ENCODE measurements at regions of chr12 and their contacts with region 1.

Region 1: GRCh38 chr12:39077226-39077625 is 171.8 kb upstream of the CPNE8 start:
- DNase-seq: no peak
- ATAC-seq: no peak
- H3K4me3 ChIP-seq: no peak overlapping the region
- H3K27ac ChIP-seq: no peak overlapping the region
- H3K4me1 ChIP-seq: no peaks in the 10 kb centered on the region
- H3K27me3 ChIP-seq: no peaks in the 10 kb centered on the region
- CTCF ChIP-seq: no peak

Region 2: DNA sequence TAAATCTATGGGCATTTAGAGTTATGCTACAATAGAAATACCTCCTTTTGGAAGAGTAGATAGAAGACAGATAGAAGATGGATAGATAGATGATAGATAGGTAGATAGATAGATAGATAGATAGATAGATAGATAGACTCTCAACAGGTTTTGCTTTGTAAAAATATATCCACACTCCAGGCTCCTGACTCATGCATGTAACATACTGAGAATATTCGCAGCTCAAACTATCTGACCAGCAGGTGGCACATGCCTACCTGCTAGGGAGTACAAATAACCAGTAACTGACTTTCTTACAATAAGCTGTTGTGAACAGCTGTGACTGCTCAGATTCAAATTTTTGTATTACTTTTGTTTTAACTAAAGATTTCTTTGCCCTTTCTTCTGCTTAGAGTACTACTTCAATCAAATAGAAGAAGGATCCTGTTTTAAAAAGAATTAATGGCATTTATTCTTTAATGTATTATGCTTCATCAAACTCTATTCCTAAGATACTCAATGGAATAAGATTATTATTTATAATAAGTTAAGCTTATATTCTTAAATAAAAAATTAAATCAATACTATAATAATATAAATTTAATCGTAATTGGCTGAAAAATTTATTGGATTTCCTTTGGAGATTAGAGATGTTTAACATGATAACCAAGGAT is 156.1 kb before region 1 on chr12:
- CTCF ChIA-PET with region 1: interaction called, 4 read pairs
- POLR2A ChIA-PET with region 1: no interaction called
- intact Hi-C with region 1: loop called (anchors 10 kb)
- DNase-seq: peak; percentile 92
- ATAC-seq: peak; percentile 96
- H3K4me3 ChIP-seq: no peak overlapping the region
- H3K27ac ChIP-seq: no peak overlapping the region
- H3K4me1 ChIP-seq: peaks cover 11% of the 10 kb centered on the region
- H3K27me3 ChIP-seq: no peaks in the 10 kb centered on the region
- CTCF ChIP-seq: peak; percentile 85

Region 3: DNA sequence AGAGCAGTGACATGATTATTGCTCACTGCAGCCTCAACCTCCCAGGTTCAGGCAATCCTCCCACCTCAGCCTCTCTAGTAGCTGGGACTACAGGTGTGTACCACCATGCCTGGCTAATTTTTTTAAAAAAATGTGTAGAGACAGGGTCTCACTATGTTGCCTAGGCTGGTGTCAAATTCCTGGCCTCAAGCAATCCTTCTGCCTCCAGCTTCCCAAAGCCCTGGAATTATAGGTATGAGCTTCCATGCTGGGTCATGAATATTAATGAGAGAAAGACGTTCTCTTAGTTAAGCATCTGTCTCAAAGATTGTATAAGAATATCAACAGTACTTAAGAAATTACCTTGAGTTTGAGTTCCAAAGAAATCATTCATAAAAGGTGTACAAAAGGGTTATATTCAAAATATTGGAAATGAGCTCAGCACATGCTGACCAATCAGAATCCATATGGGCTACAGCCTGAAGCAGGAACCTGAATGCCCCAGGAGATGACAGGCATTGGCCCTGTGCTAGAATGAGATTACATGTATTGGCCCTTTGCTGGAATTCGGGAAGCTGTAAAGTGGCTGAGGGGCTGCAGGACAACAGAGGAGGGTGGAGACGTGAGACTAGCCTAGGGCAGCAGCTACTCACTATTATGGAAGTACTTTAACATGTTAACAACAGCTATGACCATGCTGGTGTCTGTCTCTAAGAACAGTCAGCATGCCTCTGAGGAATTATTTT is 14.8 kb before region 1 on chr12:
- CTCF ChIA-PET with region 1: no interaction called
- POLR2A ChIA-PET with region 1: no interaction called
- intact Hi-C with region 1: no loop called
- DNase-seq: no peak
- ATAC-seq: no peak
- H3K4me3 ChIP-seq: no peak overlapping the region
- H3K27ac ChIP-seq: no peak overlapping the region
- H3K4me1 ChIP-seq: no peaks in the 10 kb centered on the region
- H3K27me3 ChIP-seq: no peaks in the 10 kb centered on the region
- CTCF ChIP-seq: no peak

Region 4: DNA sequence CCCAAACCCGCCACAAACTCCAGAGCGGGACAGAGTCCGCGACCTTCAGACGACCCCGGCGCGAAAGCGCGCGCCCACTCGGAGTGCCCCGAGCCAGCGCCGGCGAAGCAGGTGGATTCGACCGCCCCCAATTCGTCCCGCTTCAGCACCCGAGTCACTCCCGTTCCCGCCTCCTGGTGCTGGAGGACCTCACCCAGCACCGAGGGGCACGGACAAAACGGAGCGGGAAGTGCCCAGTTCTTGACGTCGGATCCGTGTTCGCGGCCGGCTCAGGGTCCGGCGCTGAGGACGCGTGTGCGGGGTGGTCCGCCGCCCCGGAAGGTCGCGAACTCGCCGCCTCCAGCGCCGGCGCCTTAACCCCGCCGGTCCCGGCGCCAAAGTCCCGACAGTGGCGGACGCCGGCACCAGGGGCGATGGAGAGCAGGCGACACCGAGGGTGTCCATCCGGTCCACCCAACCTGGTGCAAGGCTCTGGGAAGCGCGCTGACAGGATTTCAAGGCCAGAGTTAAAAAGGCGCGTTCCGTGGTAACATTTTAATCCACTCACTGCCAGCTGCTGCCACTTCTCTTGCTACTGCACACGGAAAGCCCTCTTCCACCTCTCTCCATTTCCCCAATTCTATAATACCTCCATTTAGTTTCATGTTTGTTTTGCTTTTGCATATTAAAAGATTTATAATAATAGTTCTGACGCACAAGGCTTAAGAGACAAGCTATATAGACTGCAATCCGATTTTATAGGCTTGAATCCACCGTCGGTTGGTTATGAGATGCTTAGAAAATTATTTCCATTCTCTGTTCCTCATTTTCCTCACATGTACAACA is 68.2 kb after region 1 on chr12:
- CTCF ChIA-PET with region 1: no interaction called
- POLR2A ChIA-PET with region 1: no interaction called
- intact Hi-C with region 1: no loop called
- DNase-seq: peak; percentile 70
- ATAC-seq: peak; percentile 99
- H3K4me3 ChIP-seq: peak overlapping the region; percentile 67
- H3K27ac ChIP-seq: no peak overlapping the region
- H3K4me1 ChIP-seq: peaks cover 3% of the 10 kb centered on the region; the same call in 1 of the 2 replicates
- H3K27me3 ChIP-seq: no peaks in the 10 kb centered on the region
- CTCF ChIP-seq: peak; percentile 80

Region 5: GRCh38 chr12:39176356-39176755 is 99.1 kb after region 1 on chr12:
- CTCF ChIA-PET with region 1: no interaction called
- POLR2A ChIA-PET with region 1: no interaction called
- intact Hi-C with region 1: no loop called
- DNase-seq: no peak
- ATAC-seq: no peak
- H3K4me3 ChIP-seq: no peak overlapping the region
- H3K27ac ChIP-seq: no peak overlapping the region
- H3K4me1 ChIP-seq: peaks cover 38% of the 10 kb centered on the region
- H3K27me3 ChIP-seq: no peaks in the 10 kb centered on the region
- CTCF ChIP-seq: no peak

Measured in PC-3 (cell line).